Activated CD4-positive, alpha-beta T cell treated with anti-CD3 and anti-CD28 coated beads, Interleukin-2, amount 10 ng/mL, durations not matched to agents 24 days and 14 days (primary cell): ENCODE measurements at regions of chr18 and their contacts with region 1.

Region 1: GRCh38 chr18:69948919-69949537 is 1.4 kb upstream of the CD226 start:
- DNase-seq: peak; percentile 83
- H3K4me3 Mint-ChIP-seq: no peak overlapping the region
- H3K27ac Mint-ChIP-seq: no peak overlapping the region
- H3K4me1 Mint-ChIP-seq: peaks cover 42% of the 10 kb centered on the region
- H3K27me3 Mint-ChIP-seq: no peaks in the 10 kb centered on the region

Region 2: DNA sequence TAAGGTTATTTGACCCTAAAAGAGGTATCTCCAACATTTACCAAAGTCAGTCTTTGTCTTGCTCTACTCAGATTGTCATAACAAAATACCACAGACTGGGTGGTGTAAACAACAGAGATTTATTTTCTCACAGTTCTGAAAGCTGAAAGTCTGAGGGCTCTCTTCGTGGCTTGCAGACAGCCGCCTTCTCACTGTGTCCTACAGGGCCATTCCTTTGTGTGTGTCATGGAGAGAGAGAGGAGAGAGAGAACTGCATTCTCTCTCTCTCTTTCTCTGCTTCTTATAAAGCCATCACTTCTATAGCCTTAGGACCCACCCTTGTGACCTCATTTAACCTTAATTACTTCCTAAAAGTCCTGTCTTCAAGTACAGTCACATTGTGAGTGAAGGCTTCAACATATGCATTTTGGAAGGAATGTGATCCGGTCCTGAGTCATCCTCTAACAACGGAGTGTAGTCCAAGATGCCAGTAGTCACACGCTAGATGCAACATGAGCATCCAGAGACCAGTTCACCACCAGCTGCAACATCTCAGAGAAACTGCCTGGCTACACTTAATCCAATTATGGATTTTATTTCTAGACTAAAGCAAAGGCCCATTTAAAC is 131.6 kb before region 1 on chr18:
- intact Hi-C with region 1: no loop called
- DNase-seq: no peak
- H3K4me3 Mint-ChIP-seq: no peak overlapping the region
- H3K27ac Mint-ChIP-seq: no peak overlapping the region
- H3K4me1 Mint-ChIP-seq: no peaks in the 10 kb centered on the region
- H3K27me3 Mint-ChIP-seq: no peaks in the 10 kb centered on the region

Region 3: GRCh38 chr18:69885841-69886531 is 63.0 kb before region 1 on chr18:
- intact Hi-C with region 1: loop called (anchors 1 kb)
- DNase-seq: peak; percentile 84
- H3K4me3 Mint-ChIP-seq: peak overlapping the region; percentile 72
- H3K27ac Mint-ChIP-seq: peak overlapping the region; percentile 99
- H3K4me1 Mint-ChIP-seq: peaks cover 63% of the 10 kb centered on the region
- H3K27me3 Mint-ChIP-seq: no peaks in the 10 kb centered on the region

Region 4: GRCh38 chr18:69978732-69979715 is 30.0 kb after region 1 on chr18:
- intact Hi-C with region 1: loop called (anchors 1 kb)
- DNase-seq: peak; percentile 52
- H3K4me3 Mint-ChIP-seq: no peak overlapping the region
- H3K27ac Mint-ChIP-seq: peak overlapping the region; percentile 51
- H3K4me1 Mint-ChIP-seq: peaks cover 34% of the 10 kb centered on the region
- H3K27me3 Mint-ChIP-seq: no peaks in the 10 kb centered on the region